ENCODE measurements at regions of chr2 and their contacts with region 1.

Region 1: DNA sequence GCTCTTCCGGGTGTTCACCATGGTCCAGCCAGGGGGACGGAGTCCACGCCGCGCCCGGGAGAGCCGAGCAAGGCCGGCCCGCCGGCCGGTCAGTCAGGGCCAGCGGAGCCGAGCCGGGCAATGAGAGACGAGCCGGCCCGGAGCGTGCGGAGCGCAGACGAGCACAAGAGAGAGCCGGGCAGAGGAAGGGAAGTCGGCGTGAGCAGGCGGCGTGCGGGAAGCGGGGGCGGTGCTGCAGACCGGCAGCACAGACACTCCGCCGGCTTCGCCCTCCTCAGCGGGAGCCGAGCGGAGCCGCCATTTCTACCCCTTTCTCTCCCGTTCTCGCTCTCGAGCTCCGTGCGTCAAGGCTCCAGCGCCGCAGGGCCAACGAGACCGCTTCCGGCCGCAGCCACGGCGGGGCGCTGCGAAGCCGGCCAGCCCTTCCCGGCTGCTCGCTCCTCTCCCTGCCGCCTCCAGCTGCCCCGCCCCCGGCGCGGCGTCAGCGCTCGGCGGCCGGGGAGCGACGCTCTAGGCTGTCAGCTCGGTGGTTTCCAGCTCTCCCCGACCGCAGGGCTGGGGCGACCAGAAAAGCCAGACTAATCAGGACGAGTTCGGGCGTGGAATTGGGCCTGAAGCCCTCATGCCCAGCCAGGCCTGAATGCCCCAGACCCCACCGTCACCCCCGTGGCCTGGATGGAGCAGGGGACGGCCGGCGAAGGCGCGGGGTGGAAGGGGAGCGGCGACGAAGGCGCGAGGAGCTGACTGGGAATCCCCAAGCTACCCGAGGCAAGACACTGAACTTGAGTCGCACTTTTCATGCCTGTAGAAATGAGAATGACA is at the start of gene ATAD2B:
- H3K4me3 Mint-ChIP-seq: peak within 1 kb of the TSS; percentile 90
- H3K27ac Mint-ChIP-seq: peak within 1 kb of the TSS; percentile 98
- H3K4me1 Mint-ChIP-seq: peaks cover 49% of the 10 kb centered on the region
- H3K27me3 Mint-ChIP-seq: no peaks in the 10 kb centered on the region

Region 2: GRCh38 chr2:23939987-23940717 is 13.2 kb after region 1 on chr2 and contains the start of gene UBXN2A:
- intact Hi-C with region 1: loop called (anchors 1 kb)
- H3K4me3 Mint-ChIP-seq: peak within 1 kb of the TSS; percentile 78
- H3K27ac Mint-ChIP-seq: peak within 1 kb of the TSS; percentile 84
- H3K4me1 Mint-ChIP-seq: peaks cover 39% of the 10 kb centered on the region
- H3K27me3 Mint-ChIP-seq: no peaks in the 10 kb centered on the region

Region 3: GRCh38 chr2:24046930-24047702 is 120.2 kb after region 1 on chr2 and contains the start of gene WDCP:
- intact Hi-C with region 1: loop called (anchors 1 kb)
- H3K4me3 Mint-ChIP-seq: peak within 1 kb of the TSS; percentile 96
- H3K27ac Mint-ChIP-seq: peak within 1 kb of the TSS; percentile 85
- H3K4me1 Mint-ChIP-seq: peaks cover 19% of the 10 kb centered on the region
- H3K27me3 Mint-ChIP-seq: peaks cover 17% of the 10 kb centered on the region

Region 4: GRCh38 chr2:24075915-24076848 is 149.2 kb after region 1 on chr2 and contains the start of gene SF3B6:
- intact Hi-C with region 1: loop called (anchors 1 kb)
- H3K4me3 Mint-ChIP-seq: peak within 1 kb of the TSS; percentile 98
- H3K27ac Mint-ChIP-seq: peak within 1 kb of the TSS; percentile 97
- H3K4me1 Mint-ChIP-seq: peaks cover 27% of the 10 kb centered on the region
- H3K27me3 Mint-ChIP-seq: no peaks in the 10 kb centered on the region